ENCODE measurements at regions of chr17 and their contacts with region 1.

Region 1: GRCh38 chr17:3710951-3711383 is 12.7 kb upstream of the HASPIN start:
- DNase-seq: peak; percentile 79
- H3K4me3 Mint-ChIP-seq: peak overlapping the region; percentile 50
- H3K27ac Mint-ChIP-seq: peak overlapping the region; percentile 86
- H3K4me1 Mint-ChIP-seq: peaks cover 51% of the 10 kb centered on the region
- H3K27me3 Mint-ChIP-seq: no peaks in the 10 kb centered on the region

Region 2: GRCh38 chr17:3636154-3636907 is 74.6 kb before region 1 on chr17 and contains the starts of genes CTNS and SHPK:
- intact Hi-C with region 1: loop called (anchors 1 kb)
- DNase-seq: peak; percentile 95
- H3K4me3 Mint-ChIP-seq: peak within 1 kb of the TSS; percentile 98
- H3K27ac Mint-ChIP-seq: peak within 1 kb of the TSS; percentile 99
- H3K4me1 Mint-ChIP-seq: peaks cover 44% of the 10 kb centered on the region
- H3K27me3 Mint-ChIP-seq: no peaks in the 10 kb centered on the region
- total RNA-seq, gene CTNS: 46.6 and 47.9 TPM in 2 replicates
- total RNA-seq, gene SHPK: 19.5 and 19.7 TPM in 2 replicates

Region 3: GRCh38 chr17:3695723-3696411 is 15.1 kb before region 1 on chr17 and contains the start of gene P2RX5:
- intact Hi-C with region 1: loop called (anchors 1 kb)
- DNase-seq: peak; percentile 47
- H3K4me3 Mint-ChIP-seq: peak within 1 kb of the TSS; percentile 90
- H3K27ac Mint-ChIP-seq: peak within 1 kb of the TSS; percentile 82
- H3K4me1 Mint-ChIP-seq: peaks cover 20% of the 10 kb centered on the region
- H3K27me3 Mint-ChIP-seq: no peaks in the 10 kb centered on the region
- total RNA-seq, gene P2RX5: 111 and 118 TPM in 2 replicates

Region 4: GRCh38 chr17:3723556-3724369 is 12.8 kb after region 1 on chr17 and contains the start of gene HASPIN:
- intact Hi-C with region 1: loop called (anchors 1 kb)
- DNase-seq: peak; percentile 91
- H3K4me3 Mint-ChIP-seq: peak within 1 kb of the TSS; percentile 95
- H3K27ac Mint-ChIP-seq: peak within 1 kb of the TSS; percentile 84
- H3K4me1 Mint-ChIP-seq: peaks cover 51% of the 10 kb centered on the region
- H3K27me3 Mint-ChIP-seq: no peaks in the 10 kb centered on the region
- total RNA-seq, gene HASPIN: 23.0 and 23.4 TPM in 2 replicates

Region 5: GRCh38 chr17:3762922-3763776 is 52.2 kb after region 1 on chr17:
- intact Hi-C with region 1: loop called (anchors 1 kb)
- DNase-seq: peak; percentile 24
- H3K4me3 Mint-ChIP-seq: peak overlapping the region; percentile 64
- H3K27ac Mint-ChIP-seq: peak overlapping the region; percentile 91
- H3K4me1 Mint-ChIP-seq: peaks cover 42% of the 10 kb centered on the region
- H3K27me3 Mint-ChIP-seq: no peaks in the 10 kb centered on the region

Region 6: DNA sequence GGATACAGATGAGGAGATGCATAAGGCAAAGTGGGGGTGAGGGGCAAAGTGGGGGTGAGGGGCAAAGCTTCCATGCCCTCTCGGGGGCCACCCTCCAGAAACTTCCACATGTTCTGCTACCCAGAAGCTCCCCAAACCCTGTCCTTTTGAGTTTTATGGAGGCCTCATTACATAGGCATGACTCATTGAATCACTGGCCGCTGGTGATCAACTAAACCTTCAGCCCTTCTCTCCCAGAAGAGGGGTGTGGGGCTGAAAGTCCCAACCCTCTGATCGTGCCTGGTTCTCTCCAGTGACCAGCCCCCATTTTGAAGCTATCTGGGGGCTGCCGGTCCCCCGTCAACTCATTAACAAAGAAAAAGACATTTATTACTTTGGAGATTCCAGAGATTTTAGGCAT is 62.5 kb after region 1 on chr17:
- intact Hi-C with region 1: no loop called
- DNase-seq: no peak
- H3K4me3 Mint-ChIP-seq: no peak overlapping the region
- H3K27ac Mint-ChIP-seq: no peak overlapping the region
- H3K4me1 Mint-ChIP-seq: peaks cover 19% of the 10 kb centered on the region
- H3K27me3 Mint-ChIP-seq: peaks cover 2% of the 10 kb centered on the region

Region 7: GRCh38 chr17:3796110-3796821 is 85.3 kb after region 1 on chr17:
- intact Hi-C with region 1: loop called (anchors 5 kb)
- DNase-seq: peak; percentile 68
- H3K4me3 Mint-ChIP-seq: no peak overlapping the region
- H3K27ac Mint-ChIP-seq: peak overlapping the region; percentile 10
- H3K4me1 Mint-ChIP-seq: peaks cover 50% of the 10 kb centered on the region
- H3K27me3 Mint-ChIP-seq: no peaks in the 10 kb centered on the region

Measured in activated T-helper 2 cell treated with anti-CD3 and anti-CD28 coated beads, Interferon-gamma antibody, Interleukin-2, Interleukin-4, amounts not matched to agents 10 μg/mL and 5 μg/mL and 100 μg/mL, durations not matched to agents 14 hours and 24 hours and 36 hours (primary cell).